AG04450 (cell line): ENCODE measurements at regions of chr3 and their contacts with region 1.

Region 1: DNA sequence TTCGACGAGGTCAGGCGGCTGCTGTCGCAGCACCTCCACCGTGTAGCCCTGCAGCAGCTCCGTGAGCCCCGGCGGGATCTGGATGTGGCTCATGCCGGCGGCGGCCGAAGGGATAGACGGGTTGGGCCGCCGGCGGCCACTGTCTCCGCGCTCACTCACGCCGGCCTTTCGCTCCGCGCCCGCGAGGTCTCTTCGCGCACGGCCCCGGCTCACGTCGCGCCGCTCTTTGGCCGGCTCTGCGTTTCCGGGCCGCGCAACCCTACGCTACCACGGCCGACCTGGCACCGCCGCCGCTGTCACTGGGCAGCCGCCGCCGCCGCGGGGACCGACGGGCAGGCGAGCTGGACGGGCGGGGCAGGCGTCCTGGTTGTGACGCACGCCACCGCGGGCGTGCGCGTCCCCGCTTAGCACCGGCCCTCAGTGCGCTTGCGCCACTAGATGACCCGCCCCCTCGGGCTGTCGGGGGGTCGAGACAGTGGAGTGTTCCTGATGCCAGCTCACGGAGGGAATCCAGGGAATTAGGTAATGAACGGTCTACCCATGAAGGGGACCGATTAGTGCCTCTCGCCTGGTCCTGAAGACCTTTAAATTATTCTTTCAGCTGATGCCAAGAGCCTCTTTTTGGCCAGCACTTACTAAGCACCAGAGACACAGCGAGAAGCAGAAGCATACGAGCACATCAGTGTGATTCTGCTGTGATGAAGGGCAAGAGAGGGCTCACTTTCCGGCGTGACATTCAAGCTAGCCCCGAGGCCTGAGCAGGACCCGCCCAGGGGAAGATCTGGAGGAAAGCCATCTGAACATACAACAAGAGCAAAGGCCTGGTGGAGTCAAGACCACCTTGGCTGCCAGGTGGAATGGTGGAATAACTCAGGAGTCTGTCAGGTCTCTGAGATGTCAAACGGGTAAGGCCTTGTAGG is at the start of gene PRKAR2A:
- DNase-seq: peak; percentile 49
- H3K4me3 ChIP-seq: peak within 1 kb of the TSS; percentile 88
- H3K27ac ChIP-seq: peak within 1 kb of the TSS; percentile 65
- H3K27me3 ChIP-seq: no peaks in the 10 kb centered on the region
- CTCF ChIP-seq: no peak
- polyA plus RNA-seq, gene PRKAR2A: 19.6 and 20.7 TPM in 2 replicates

Region 2: DNA sequence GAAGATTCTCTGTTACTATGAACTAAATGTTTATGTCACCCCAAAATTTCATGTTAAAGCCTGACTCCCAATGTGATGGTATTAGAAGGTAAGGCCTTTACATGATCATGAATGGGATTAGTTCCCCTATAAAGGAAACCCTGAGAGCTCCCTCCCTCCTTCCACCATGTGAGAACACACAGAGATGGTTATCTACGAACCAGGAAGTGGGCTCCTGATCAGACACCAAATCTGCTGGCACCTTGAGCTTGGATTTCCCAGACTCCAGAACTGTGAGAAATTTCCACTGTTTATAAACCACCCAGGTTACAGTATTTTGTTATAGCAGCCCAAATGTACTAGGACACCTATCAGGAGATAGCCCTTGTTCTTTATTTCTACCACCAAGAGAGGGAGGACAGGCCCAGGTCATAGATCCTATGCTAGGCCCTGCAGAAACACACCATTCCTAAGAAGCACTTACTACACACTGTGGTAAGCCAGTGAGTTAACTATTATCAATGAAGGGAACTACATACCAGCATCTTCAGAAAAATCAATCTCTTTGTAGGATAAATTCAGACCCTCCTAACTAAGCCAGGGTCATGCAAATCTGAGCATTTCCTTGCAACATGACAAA is 59.1 kb before region 1 on chr3:
- CTCF ChIA-PET with region 1: no interaction called
- POLR2A ChIA-PET with region 1: interaction called, 12 read pairs
- DNase-seq: no peak
- H3K4me3 ChIP-seq: no peak overlapping the region
- H3K27ac ChIP-seq: no peak overlapping the region
- H3K27me3 ChIP-seq: no peaks in the 10 kb centered on the region
- CTCF ChIP-seq: no peak